Heart right ventricle (tissue), 16 donors: ENCODE measurements at regions of chr13 and their contacts with region 1.

Region 1: GRCh38 chr13:111046590-111047141 is 68.4 kb upstream of the ARHGEF7 start:
- DNase-seq: peak in 1 of 2 donors; percentile 50
- ATAC-seq: peak; percentile 11 to 69 (median 49)
- H3K4me3 ChIP-seq: no peak overlapping the region
- H3K27ac ChIP-seq: peak overlapping the region in 7 of 10 donors; percentile 14 to 79 (median 63)
- H3K4me1 ChIP-seq: peaks cover 0 to 21% (median 4%) of the 10 kb centered on the region in 9 donors
- H3K27me3 ChIP-seq: peaks cover 0 to 8% (median 0%) of the 10 kb centered on the region in 7 donors
- CTCF ChIP-seq: peak in 4 of 9 donors; percentile 12 to 46 (median 30)

Region 2: GRCh38 chr13:110593430-110594130 is 453.1 kb before region 1 on chr13:
- intact Hi-C with region 1: loop called in 3 of 10 experiments (anchors 5 to 10 kb)
- DNase-seq: no peak
- ATAC-seq: peak; percentile 68 to 93 (median 86)
- H3K4me3 ChIP-seq: no peak overlapping the region
- H3K27ac ChIP-seq: no peak overlapping the region
- H3K4me1 ChIP-seq: no peaks in the 10 kb centered on the region
- H3K27me3 ChIP-seq: no peaks in the 10 kb centered on the region
- CTCF ChIP-seq: peak; percentile 36 to 79 (median 68)

Region 3: GRCh38 chr13:110921209-110921608 is 125.5 kb before region 1 on chr13:
- intact Hi-C with region 1: loop called in 6 of 10 experiments (anchors 1 to 5 kb)
- DNase-seq: no peak
- ATAC-seq: no peak
- H3K4me3 ChIP-seq: no peak overlapping the region
- H3K27ac ChIP-seq: peak overlapping the region in 5 of 10 donors; percentile 2 to 55 (median 32)
- H3K4me1 ChIP-seq: peaks cover 0 to 44% (median 17%) of the 10 kb centered on the region in 9 donors
- H3K27me3 ChIP-seq: no peaks in the 10 kb centered on the region
- CTCF ChIP-seq: no peak

Region 4: GRCh38 chr13:110937511-110938285 is 109.0 kb before region 1 on chr13:
- intact Hi-C with region 1: loop called in 5 of 10 experiments (anchors 5 to 10 kb)
- DNase-seq: no peak
- ATAC-seq: no peak
- H3K4me3 ChIP-seq: no peak overlapping the region
- H3K27ac ChIP-seq: no peak overlapping the region
- H3K4me1 ChIP-seq: peaks cover 0 to 17% (median 0%) of the 10 kb centered on the region in 9 donors
- H3K27me3 ChIP-seq: no peaks in the 10 kb centered on the region
- CTCF ChIP-seq: no peak

Region 5: GRCh38 chr13:110944121-110944967 is 102.3 kb before region 1 on chr13:
- intact Hi-C with region 1: loop called in 5 of 10 experiments (anchors 5 to 10 kb)
- DNase-seq: peak in 1 of 2 donors; percentile 33
- ATAC-seq: peak; percentile 46 to 77 (median 64)
- H3K4me3 ChIP-seq: no peak overlapping the region
- H3K27ac ChIP-seq: peak overlapping the region in 8 of 10 donors; percentile 6 to 72 (median 52)
- H3K4me1 ChIP-seq: peaks cover 0 to 33% (median 11%) of the 10 kb centered on the region in 9 donors
- H3K27me3 ChIP-seq: no peaks in the 10 kb centered on the region
- CTCF ChIP-seq: peak in 8 of 9 donors; percentile 8 to 64 (median 54)

Region 6: DNA sequence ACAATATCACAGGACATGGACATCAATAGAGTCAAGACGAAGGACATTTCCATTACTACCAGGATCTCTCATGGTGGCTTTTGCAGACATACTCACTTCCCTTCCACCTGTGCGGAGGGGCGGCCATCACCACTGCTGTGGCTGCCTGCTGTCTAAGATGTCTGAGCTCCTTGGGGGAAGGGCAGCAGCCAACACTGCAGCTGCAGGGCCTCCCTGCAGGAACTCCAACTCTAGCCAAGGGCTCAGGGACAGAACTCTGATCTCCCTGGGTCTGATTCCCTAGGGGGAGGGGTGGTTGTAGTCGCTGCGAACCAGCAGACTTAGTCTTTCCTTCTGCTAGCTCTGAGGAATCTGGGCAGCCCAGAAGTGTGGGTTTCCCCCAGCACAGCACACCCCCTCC is 52.9 kb before region 1 on chr13:
- intact Hi-C with region 1: no loop called
- DNase-seq: no peak
- ATAC-seq: no peak
- H3K4me3 ChIP-seq: no peak overlapping the region
- H3K27ac ChIP-seq: no peak overlapping the region
- H3K4me1 ChIP-seq: no peaks in the 10 kb centered on the region
- H3K27me3 ChIP-seq: peaks cover 0 to 9% (median 0%) of the 10 kb centered on the region in 7 donors
- CTCF ChIP-seq: no peak

Region 7: GRCh38 chr13:111006506-111007031 is 40.1 kb before region 1 on chr13:
- intact Hi-C with region 1: no loop called
- DNase-seq: peak; percentile 70 to 88
- ATAC-seq: peak; percentile 95 to 98 (median 96)
- H3K4me3 ChIP-seq: peak overlapping the region in 2 of 10 donors; percentile 18 to 28
- H3K27ac ChIP-seq: peak overlapping the region; percentile 73 to 93 (median 86)
- H3K4me1 ChIP-seq: peaks cover 2 to 35% (median 25%) of the 10 kb centered on the region in 9 donors
- H3K27me3 ChIP-seq: no peaks in the 10 kb centered on the region
- CTCF ChIP-seq: no peak

Region 8: GRCh38 chr13:111066544-111066943 is 19.9 kb after region 1 on chr13:
- intact Hi-C with region 1: no loop called
- DNase-seq: no peak
- ATAC-seq: peak; percentile 29 to 62 (median 54)
- H3K4me3 ChIP-seq: peak overlapping the region in 7 of 10 donors; percentile 63 to 74 (median 66)
- H3K27ac ChIP-seq: peak overlapping the region in 7 of 10 donors; percentile 45 to 68 (median 61)
- H3K4me1 ChIP-seq: peaks cover 0 to 15% (median 7%) of the 10 kb centered on the region in 9 donors
- H3K27me3 ChIP-seq: peaks cover 0 to 36% (median 0%) of the 10 kb centered on the region in 7 donors
- CTCF ChIP-seq: no peak